CD4-positive, alpha-beta memory T cell (primary cell): ENCODE measurements at regions of chr7 and their contacts with region 1.

Region 1: DNA sequence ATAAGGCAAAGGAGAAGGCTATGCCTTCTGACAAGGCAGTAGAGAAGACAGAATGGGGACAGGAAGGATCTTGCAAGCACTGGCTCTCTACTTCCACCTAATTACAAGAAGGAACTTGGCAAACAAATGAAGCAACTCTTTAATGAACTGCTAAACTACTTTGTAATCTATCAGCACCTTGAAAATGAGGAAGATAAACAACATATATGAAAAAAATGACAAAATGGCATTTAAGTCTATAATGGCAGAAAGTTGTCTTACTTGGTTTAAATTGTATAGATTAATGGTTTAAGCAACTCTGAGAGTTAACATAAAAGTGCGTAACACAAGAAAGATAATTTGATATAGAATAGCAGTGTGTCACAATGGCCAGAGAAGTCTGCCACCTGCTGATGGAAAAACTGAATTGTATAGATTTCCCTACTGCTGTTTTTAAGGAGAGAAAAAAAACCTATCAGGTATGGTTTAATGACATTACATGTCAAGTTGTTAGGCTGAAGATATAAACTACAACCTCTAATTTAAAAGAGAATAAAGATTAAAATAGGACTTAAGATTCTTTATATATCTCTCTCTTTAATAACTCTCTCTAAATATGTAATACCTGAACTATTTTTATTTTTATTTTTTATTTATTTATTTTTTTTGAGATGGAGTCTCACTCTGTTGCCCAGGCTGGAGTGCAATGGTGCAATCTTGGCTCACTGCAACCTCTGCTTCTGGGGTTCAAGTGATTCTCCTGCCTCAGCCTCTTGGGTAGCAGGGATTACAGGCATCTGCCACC is 11.8 kb downstream of the NT5C3A start:
- DNase-seq: peak; percentile 41 to 61 (median 55)
- H3K4me3 ChIP-seq: no peak overlapping the region
- H3K4me3 Mint-ChIP-seq: peak overlapping the region in 1 of 8 donors; percentile 1
- H3K27ac ChIP-seq: no peak overlapping the region
- H3K27ac Mint-ChIP-seq: peak overlapping the region in 4 of 7 donors; percentile 10 to 39 (median 29)
- H3K4me1 ChIP-seq: peaks cover 50% of the 10 kb centered on the region
- H3K4me1 Mint-ChIP-seq: peaks cover 28 to 70% (median 47%) of the 10 kb centered on the region in 4 donors
- H3K27me3 ChIP-seq: no peaks in the 10 kb centered on the region
- H3K27me3 Mint-ChIP-seq: no peaks in the 10 kb centered on the region

Region 2: DNA sequence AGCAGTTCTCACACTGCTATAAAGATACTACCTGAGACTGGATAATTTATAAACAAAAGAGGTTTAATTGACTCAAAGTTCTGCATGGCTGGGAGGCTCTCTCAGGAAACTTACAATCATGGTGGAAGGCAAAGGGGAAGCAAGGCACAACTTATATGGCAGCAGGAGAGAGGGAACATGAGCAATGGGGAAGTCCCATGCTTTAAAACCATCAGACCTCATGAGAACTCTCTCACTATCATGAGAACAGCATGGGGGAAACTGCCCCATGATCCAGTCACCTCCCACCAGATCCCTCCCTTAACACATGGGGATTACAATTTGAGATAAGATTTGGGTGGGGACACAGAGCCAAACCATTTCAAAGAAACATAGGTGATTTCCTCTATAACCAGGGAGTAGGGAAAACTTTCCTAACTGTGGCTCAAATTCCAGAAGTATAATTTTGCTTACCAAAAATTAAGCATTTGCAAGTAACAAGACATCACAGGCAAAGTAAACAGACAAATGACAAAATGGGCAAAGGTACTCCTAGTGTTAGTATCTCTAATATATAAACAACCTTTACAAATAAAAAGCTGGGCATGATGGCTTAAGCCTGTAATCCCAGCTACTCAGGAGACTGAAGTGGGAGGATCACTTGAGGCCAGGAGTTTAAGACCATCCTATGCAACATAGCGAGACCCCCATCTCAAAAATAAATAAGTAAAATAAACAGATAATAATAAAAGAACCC is 247.2 kb before region 1 on chr7:
- CTCF ChIA-PET with region 1: interaction called, 3 read pairs
- POLR2A ChIA-PET with region 1: no interaction called
- intact Hi-C with region 1: loop called (anchors 1 kb)
- DNase-seq: no peak
- H3K4me3 ChIP-seq: no peak overlapping the region
- H3K4me3 Mint-ChIP-seq: no peak overlapping the region
- H3K27ac ChIP-seq: no peak overlapping the region
- H3K27ac Mint-ChIP-seq: no peak overlapping the region
- H3K4me1 ChIP-seq: no peaks in the 10 kb centered on the region
- H3K4me1 Mint-ChIP-seq: no peaks in the 10 kb centered on the region
- H3K27me3 ChIP-seq: no peaks in the 10 kb centered on the region
- H3K27me3 Mint-ChIP-seq: peaks cover 0 to 1% of the 10 kb centered on the region in 2 donors